CD4-positive, alpha-beta T cell (primary cell): ENCODE measurements at regions of chr11 and their contacts with region 1.

Region 1: DNA sequence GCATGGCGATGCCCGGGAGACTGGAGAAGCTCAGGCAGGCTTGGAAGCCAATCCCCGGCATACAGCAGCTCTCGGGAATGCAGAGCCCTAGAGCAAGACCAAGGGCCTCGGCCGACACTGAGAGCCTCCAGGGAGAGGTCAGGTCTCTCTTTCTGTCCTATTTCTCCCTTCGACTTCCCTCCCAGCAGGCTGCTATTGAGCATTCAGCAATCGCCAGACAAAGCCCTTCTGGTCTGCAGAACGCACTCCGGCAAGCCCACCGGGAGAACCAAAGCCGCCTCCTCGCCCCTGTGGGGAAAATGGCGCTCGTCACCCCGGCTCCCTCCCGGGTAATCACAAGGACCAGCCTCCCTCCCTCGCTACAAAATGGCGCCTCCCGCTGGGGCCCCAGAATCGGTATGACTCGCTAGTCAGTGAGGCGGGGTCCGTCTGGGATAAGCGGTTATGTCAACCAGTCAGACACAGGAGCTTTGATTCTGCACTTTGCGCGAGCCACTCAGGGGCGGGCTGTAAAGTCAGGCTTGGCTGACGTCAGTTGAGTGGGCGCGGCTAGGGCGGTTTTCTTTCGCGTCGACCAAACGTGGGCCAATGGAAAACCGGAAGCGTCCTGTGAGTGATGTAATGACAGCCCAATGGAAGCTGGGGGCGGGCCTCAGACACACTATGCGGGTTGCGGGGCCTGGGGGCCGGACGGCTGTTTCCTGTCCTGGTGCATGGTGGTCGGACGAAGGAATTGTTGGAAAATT is at the start of gene ZNF143:
- DNase-seq: peak; percentile 99 to 100 (median 100)
- ATAC-seq: peak; percentile 88
- H3K4me3 ChIP-seq: peak within 1 kb of the TSS; percentile 90
- H3K4me3 Mint-ChIP-seq: peak within 1 kb of the TSS; percentile 99
- H3K27ac ChIP-seq: peak within 1 kb of the TSS; percentile 95 to 97
- H3K27ac Mint-ChIP-seq: peak within 1 kb of the TSS; percentile 100
- H3K4me1 ChIP-seq: peaks cover 29% of the 10 kb centered on the region
- H3K4me1 Mint-ChIP-seq: peaks cover 30% of the 10 kb centered on the region
- H3K27me3 ChIP-seq: no peaks in the 10 kb centered on the region
- H3K27me3 Mint-ChIP-seq: no peaks in the 10 kb centered on the region
- CTCF ChIP-seq: no peak
- total RNA-seq, gene ZNF143: 18.0 to 20.3 TPM

Region 2: GRCh38 chr11:8688414-8689362 is 771.8 kb before region 1 on chr11:
- CTCF ChIA-PET with region 1: no interaction called
- POLR2A ChIA-PET with region 1: interaction called, 5 read pairs
- intact Hi-C with region 1: loop called in 1 of 2 experiments (anchors 10 kb)
- DNase-seq: peak; percentile 46 to 89 (median 77)
- ATAC-seq: peak; percentile 76
- H3K4me3 ChIP-seq: peak overlapping the region; percentile 73
- H3K4me3 Mint-ChIP-seq: peak overlapping the region; percentile 96
- H3K27ac ChIP-seq: peak overlapping the region; percentile 73 to 84
- H3K27ac Mint-ChIP-seq: peak overlapping the region; percentile 90
- H3K4me1 ChIP-seq: peaks cover 26% of the 10 kb centered on the region
- H3K4me1 Mint-ChIP-seq: peaks cover 43% of the 10 kb centered on the region
- H3K27me3 ChIP-seq: no peaks in the 10 kb centered on the region
- H3K27me3 Mint-ChIP-seq: no peaks in the 10 kb centered on the region
- CTCF ChIP-seq: no peak

Region 3: GRCh38 chr11:9265211-9266131 is 195.0 kb before region 1 on chr11 and contains the start of gene DENND5A:
- CTCF ChIA-PET with region 1: no interaction called
- POLR2A ChIA-PET with region 1: interaction called, 9 read pairs
- intact Hi-C with region 1: loop called in 1 of 2 experiments (anchors 5 kb)
- DNase-seq: peak; percentile 18 to 82 (median 50)
- ATAC-seq: peak; percentile 52
- H3K4me3 ChIP-seq: peak within 1 kb of the TSS; percentile 91
- H3K4me3 Mint-ChIP-seq: peak within 1 kb of the TSS; percentile 98
- H3K27ac ChIP-seq: peak within 1 kb of the TSS; percentile 77
- H3K27ac Mint-ChIP-seq: peak within 1 kb of the TSS; percentile 95
- H3K4me1 ChIP-seq: peaks cover 32% of the 10 kb centered on the region
- H3K4me1 Mint-ChIP-seq: peaks cover 35% of the 10 kb centered on the region
- H3K27me3 ChIP-seq: no peaks in the 10 kb centered on the region
- H3K27me3 Mint-ChIP-seq: no peaks in the 10 kb centered on the region
- CTCF ChIP-seq: no peak
- total RNA-seq, gene DENND5A: 101 to 103 TPM

Region 4: DNA sequence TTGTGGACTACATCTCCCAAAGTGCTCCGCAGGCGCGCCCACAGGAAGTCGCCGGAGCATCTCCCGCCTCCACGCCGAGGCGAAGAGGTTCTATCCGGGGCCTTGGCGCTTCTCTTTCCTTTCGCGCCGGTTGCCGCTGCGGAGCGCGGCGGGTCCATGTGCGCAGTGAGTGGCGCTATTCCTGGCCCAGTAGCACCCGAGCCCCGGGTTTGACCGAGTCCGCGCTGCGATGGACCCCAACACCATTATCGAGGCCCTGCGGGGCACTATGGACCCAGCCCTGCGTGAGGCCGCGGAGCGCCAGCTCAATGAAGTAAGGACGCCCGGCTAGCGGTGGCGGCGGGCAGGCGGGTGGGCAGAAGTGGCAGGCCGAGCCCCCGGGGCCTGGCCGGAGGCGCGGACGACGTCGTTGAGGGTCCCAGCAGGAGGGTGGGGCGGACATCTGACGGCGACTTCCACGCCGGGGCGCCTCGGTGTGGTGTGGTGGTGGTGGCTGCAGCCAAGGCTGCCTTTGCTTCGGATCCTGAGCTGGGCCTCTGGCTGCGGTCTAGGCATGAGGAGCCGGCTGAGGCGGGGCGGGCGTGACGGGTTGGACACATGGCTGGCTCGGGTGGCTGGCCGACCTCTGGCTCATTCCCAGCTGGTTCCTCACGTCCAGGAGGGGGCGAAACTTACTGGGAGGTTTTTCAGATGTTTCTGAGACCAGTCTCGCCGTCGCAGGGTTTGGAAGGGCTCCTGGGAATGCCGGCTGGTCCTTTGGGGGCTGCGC is 75.8 kb before region 1 on chr11 and contains the start of gene IPO7:
- CTCF ChIA-PET with region 1: interaction called, 3 read pairs
- POLR2A ChIA-PET with region 1: interaction called, 43 read pairs
- intact Hi-C with region 1: loop called (anchors 2 kb)
- DNase-seq: peak; percentile 72 to 93 (median 84)
- ATAC-seq: peak; percentile 98
- H3K4me3 ChIP-seq: peak within 1 kb of the TSS; percentile 82
- H3K4me3 Mint-ChIP-seq: peak within 1 kb of the TSS; percentile 96
- H3K27ac ChIP-seq: peak within 1 kb of the TSS; percentile 69 to 78
- H3K27ac Mint-ChIP-seq: peak within 1 kb of the TSS; percentile 80
- H3K4me1 ChIP-seq: peaks cover 29% of the 10 kb centered on the region
- H3K4me1 Mint-ChIP-seq: peaks cover 42% of the 10 kb centered on the region
- H3K27me3 ChIP-seq: no peaks in the 10 kb centered on the region
- H3K27me3 Mint-ChIP-seq: no peaks in the 10 kb centered on the region
- CTCF ChIP-seq: no peak
- total RNA-seq, gene IPO7: 40.7 to 51.6 TPM

Region 5: DNA sequence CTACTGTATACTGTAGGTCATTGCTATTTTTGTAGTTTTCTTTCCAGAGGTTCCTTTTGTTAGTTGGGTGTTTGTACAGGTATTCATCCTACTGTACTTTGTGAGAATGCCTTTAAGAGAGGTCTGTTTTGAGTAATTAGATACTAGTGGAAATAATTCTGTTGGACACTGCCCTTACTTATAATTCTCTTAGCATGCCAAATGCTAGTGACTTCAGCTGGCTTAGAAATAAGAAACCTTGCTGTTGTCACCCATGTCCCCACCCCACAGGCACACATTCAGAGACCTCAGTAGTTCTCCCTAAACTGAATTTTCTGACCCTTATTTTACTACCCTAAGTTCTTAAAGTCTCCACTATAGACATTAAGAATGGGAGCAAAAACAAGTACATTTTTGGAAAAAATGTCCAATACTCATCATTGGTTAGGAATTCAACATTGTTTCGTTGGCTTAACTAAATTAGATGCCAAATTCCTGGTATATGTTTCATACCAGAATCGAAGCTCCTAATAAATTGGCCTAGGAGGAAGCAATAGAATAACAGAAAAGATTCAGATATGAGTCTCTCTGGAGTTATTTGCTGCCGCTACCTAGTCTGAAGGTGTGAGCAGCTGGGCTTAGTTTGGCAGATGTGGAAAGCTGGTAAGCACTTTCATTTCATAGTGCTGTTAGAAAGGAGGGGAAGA is 28.7 kb after region 1 on chr11:
- CTCF ChIA-PET with region 1: no interaction called
- POLR2A ChIA-PET with region 1: interaction called, 12 read pairs
- intact Hi-C with region 1: no loop called
- DNase-seq: no peak
- ATAC-seq: no peak
- H3K4me3 ChIP-seq: no peak overlapping the region
- H3K4me3 Mint-ChIP-seq: no peak overlapping the region
- H3K27ac ChIP-seq: no peak overlapping the region
- H3K27ac Mint-ChIP-seq: no peak overlapping the region
- H3K4me1 ChIP-seq: no peaks in the 10 kb centered on the region
- H3K4me1 Mint-ChIP-seq: no peaks in the 10 kb centered on the region
- H3K27me3 ChIP-seq: no peaks in the 10 kb centered on the region
- H3K27me3 Mint-ChIP-seq: no peaks in the 10 kb centered on the region
- CTCF ChIP-seq: no peak

Region 6: GRCh38 chr11:9651899-9652748 is 191.6 kb after region 1 on chr11:
- CTCF ChIA-PET with region 1: no interaction called
- POLR2A ChIA-PET with region 1: no interaction called
- intact Hi-C with region 1: no loop called
- DNase-seq: no peak
- ATAC-seq: no peak
- H3K4me3 ChIP-seq: no peak overlapping the region
- H3K4me3 Mint-ChIP-seq: no peak overlapping the region
- H3K27ac ChIP-seq: no peak overlapping the region
- H3K27ac Mint-ChIP-seq: no peak overlapping the region
- H3K4me1 ChIP-seq: no peaks in the 10 kb centered on the region
- H3K4me1 Mint-ChIP-seq: no peaks in the 10 kb centered on the region
- H3K27me3 ChIP-seq: no peaks in the 10 kb centered on the region
- H3K27me3 Mint-ChIP-seq: no peaks in the 10 kb centered on the region
- CTCF ChIP-seq: no peak

Region 7: GRCh38 chr11:10307442-10308207 is 847.1 kb after region 1 on chr11:
- CTCF ChIA-PET with region 1: interaction called, 4 read pairs
- POLR2A ChIA-PET with region 1: interaction called, 3 read pairs
- intact Hi-C with region 1: loop called in 1 of 2 experiments (anchors 5 kb)
- DNase-seq: peak; percentile 70 to 92 (median 80)
- ATAC-seq: peak; percentile 66
- H3K4me3 ChIP-seq: peak overlapping the region; percentile 63
- H3K4me3 Mint-ChIP-seq: peak overlapping the region; percentile 95
- H3K27ac ChIP-seq: no peak overlapping the region
- H3K27ac Mint-ChIP-seq: no peak overlapping the region
- H3K4me1 ChIP-seq: peaks cover 56% of the 10 kb centered on the region
- H3K4me1 Mint-ChIP-seq: peaks cover 40% of the 10 kb centered on the region
- H3K27me3 ChIP-seq: peaks cover 32 to 45% of the 10 kb centered on the region in 2 experiments
- H3K27me3 Mint-ChIP-seq: peaks cover 80% of the 10 kb centered on the region
- CTCF ChIP-seq: peak; percentile 98